ENCODE measurements at regions of chr12 and their contacts with region 1.

Region 1: DNA sequence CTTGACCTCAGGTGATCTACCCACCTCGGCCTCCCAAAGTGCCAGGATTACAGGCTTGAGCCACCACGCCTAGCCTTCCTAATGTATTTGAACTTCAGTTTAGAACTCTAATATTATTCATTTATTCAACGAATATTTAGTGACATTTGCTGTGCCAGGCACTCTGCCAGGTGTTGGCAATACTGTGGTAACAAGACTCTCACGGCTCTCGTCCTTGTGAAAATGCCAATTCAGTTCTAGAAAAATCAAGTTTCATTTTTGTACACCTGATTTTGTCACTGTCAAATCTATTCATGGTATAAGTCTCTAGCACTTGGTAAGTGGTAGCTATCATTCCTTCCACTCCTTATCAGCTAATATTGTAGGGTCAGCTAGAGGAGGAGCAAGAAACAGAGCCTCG is 6.3 kb upstream of the PWP1 start:
- DNase-seq: no peak
- H3K4me3 ChIP-seq: no peak overlapping the region
- H3K4me3 Mint-ChIP-seq: no peak overlapping the region
- H3K27ac ChIP-seq: no peak overlapping the region
- H3K27ac Mint-ChIP-seq: no peak overlapping the region
- H3K4me1 ChIP-seq: peaks cover under 1% of the 10 kb centered on the region
- H3K4me1 Mint-ChIP-seq: peaks cover 0 to 3% (median 1%) of the 10 kb centered on the region in 4 donors
- H3K27me3 ChIP-seq: no peaks in the 10 kb centered on the region
- H3K27me3 Mint-ChIP-seq: peaks cover 4 to 17% of the 10 kb centered on the region in 2 donors

Region 2: DNA sequence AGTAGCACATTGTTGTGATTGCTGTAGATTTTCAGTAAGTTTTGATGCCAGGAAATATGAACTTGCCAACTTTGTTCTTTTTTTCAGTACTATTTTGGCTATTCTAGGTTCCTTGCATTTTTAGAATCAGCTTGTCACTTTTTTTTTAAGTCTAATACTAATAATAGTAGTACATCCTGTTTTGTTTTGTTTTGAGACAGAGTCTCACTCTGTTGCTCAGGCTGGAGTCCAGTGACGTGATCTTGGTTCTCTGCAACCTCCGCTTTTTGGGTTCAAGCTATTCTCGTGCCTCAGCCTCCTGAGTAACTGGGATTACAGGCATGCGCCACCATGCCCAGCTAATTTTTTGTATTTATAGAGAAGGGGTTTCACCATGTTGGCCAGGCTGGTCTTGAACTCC is 22.8 kb after region 1 on chr12:
- CTCF ChIA-PET with region 1: interaction called, 18 read pairs
- POLR2A ChIA-PET with region 1: no interaction called
- intact Hi-C with region 1: no loop called
- DNase-seq: no peak
- H3K4me3 ChIP-seq: no peak overlapping the region
- H3K4me3 Mint-ChIP-seq: no peak overlapping the region
- H3K27ac ChIP-seq: no peak overlapping the region
- H3K27ac Mint-ChIP-seq: no peak overlapping the region
- H3K4me1 ChIP-seq: no peaks in the 10 kb centered on the region
- H3K4me1 Mint-ChIP-seq: peaks cover 0 to 4% (median 3%) of the 10 kb centered on the region in 4 donors
- H3K27me3 ChIP-seq: no peaks in the 10 kb centered on the region
- H3K27me3 Mint-ChIP-seq: no peaks in the 10 kb centered on the region

Region 3: DNA sequence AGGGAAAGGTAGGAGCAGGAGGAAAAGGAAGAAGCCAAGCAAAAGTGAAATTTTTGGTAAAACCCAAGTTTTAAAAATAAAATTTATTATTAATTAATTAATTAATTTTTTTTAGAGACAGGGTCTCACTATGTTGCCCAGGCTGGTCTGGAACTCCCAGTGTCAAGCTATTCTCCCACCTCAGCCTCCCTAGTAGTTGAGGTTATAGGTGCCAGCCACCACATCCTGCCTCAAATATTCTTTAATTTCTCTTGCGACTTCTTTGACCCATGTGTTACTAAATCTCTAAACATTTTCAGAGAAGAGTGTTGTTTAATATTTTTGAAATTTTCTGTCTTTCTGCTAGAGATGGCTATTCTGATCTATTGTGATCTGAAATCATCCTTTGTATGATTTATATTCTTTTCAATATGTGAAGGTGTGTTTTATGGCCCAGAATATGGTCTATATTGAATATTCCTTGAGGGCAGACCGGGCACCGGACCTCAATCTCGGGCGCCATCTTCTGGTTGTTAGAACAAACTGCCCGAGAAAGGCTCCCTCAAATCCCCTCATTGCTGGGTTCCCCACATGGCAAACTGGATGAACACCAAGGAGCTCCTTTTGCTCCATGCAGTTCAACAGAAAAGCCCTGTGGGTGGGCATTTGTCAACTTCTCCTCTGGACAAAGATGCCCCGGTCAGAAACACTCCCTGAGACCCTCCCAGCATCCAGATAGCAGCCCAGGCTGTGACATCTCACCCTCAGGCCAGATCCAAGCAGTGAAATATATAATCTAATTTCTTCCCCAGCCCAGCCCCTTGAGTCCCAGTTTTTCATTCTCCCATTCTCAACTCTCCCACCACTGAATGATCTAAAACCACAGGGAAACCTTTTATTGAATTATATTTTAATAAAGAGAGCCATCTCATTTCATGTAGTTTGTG is 205.7 kb after region 1 on chr12:
- CTCF ChIA-PET with region 1: interaction called, 14 read pairs
- POLR2A ChIA-PET with region 1: no interaction called
- intact Hi-C with region 1: no loop called
- DNase-seq: peak in 4 of 5 donors; percentile 6 to 21 (median 18)
- H3K4me3 ChIP-seq: no peak overlapping the region
- H3K4me3 Mint-ChIP-seq: no peak overlapping the region
- H3K27ac ChIP-seq: no peak overlapping the region
- H3K27ac Mint-ChIP-seq: peak overlapping the region in 2 of 7 donors; percentile 15 to 28
- H3K4me1 ChIP-seq: no peaks in the 10 kb centered on the region
- H3K4me1 Mint-ChIP-seq: peaks cover 0 to 2% (median 0%) of the 10 kb centered on the region in 4 donors
- H3K27me3 ChIP-seq: no peaks in the 10 kb centered on the region
- H3K27me3 Mint-ChIP-seq: peaks cover 6 to 21% of the 10 kb centered on the region in 2 donors